Activated CD8-positive, alpha-beta memory T cell treated with anti-CD3 and anti-CD28 coated beads, Interleukin-2, amount 10 ng/mL, durations not matched to agents 7 days and 5 days (primary cell): ENCODE measurements at regions of chr18 and their contacts with region 1.

Region 1: DNA sequence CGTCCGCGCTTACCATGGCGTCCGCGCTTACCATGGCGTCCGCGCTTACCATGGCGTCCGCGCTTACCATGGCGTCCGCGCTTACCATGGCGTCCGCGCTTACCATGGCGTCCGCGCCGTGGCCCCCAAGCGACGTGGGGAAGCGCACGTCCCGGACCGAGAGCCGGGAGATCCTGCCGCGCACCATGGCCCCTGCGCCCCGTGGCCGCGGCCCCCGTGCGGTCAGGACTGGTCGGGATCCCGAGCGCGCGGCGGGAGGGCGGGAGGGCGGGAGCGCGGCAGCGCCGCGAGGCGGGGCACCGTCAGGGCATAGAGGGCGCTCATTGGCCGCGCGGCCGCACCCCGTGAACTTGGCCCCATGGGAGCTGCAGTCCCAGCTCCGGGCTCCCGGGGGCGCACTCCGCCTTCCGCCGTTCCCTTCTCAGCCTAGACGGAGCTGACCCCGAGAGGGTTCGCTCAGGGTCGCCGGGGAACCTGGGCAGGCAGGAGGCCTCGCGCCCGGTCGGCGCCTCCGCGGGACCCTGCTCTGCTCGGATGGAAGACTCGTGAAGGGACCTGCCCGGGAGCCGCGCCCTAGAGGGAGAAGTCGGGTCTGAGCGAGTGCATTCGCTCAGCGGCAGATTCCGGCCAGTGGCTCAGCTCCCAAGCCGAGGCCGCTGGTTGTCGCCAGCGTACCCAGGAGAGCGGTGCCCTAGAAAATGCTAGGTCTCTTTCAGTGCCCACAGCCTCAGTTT is at the start of gene ENOSF1:
- DNase-seq: peak; percentile 91
- ATAC-seq: peak; percentile 90
- H3K4me3 Mint-ChIP-seq: peak within 1 kb of the TSS; percentile 85
- H3K27ac Mint-ChIP-seq: peak within 1 kb of the TSS; percentile 87
- H3K4me1 Mint-ChIP-seq: peaks cover 58% of the 10 kb centered on the region
- H3K27me3 Mint-ChIP-seq: no peaks in the 10 kb centered on the region
- total RNA-seq, gene ENOSF1: 79.3 to 84.3 TPM

Region 2: GRCh38 chr18:623761-624620 is 88.6 kb before region 1 on chr18:
- CTCF ChIA-PET with region 1: interaction called, 25 read pairs
- DNase-seq: peak; percentile 75
- ATAC-seq: peak; percentile 83
- H3K4me3 Mint-ChIP-seq: no peak overlapping the region
- H3K27ac Mint-ChIP-seq: no peak overlapping the region
- H3K4me1 Mint-ChIP-seq: no peaks in the 10 kb centered on the region
- H3K27me3 Mint-ChIP-seq: peaks cover 36% of the 10 kb centered on the region

Region 3: DNA sequence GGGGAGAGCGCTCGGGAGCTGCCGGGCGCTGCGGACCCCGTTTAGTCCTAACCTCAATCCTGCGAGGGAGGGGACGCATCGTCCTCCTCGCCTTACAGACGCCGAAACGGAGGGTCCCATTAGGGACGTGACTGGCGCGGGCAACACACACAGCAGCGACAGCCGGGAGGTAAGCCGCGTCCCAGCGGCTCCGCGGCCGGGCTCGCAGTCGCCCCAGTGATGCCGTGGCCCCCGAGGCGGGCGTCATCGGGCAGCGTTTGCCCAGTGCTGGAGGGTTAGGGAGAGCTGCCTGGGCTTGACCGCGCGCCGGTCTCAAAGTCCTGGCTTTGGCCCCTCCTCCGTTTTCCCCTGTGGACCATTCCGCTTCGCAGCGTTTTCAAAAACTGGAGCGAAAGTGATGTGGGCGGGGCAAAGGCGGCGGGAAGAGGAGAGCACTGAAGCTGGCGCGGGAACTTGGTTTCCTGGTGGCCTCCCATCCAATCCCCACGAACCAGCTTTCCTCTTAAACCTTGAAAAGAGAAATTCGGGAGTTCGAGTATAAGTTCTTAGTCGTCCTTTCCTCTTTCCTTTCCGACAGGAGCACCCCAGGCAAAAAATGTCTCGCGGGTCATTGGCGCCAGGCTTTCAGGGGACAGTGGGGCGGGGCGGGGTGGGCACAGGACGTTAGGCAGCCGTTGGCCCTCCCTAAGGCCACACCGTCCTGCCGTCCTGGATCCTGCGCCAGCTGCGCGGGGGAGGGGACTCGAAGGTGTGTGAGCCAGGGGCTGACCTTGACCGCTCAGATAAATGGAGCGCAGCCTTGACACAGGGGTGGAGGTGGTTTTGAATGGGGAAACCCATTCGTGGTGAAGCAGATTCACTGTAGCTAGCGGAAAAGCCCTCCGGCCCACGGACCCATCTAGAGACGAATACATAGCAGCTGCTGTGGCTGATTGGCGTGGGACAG is 54.3 kb before region 1 on chr18:
- CTCF ChIA-PET with region 1: interaction called, 13 read pairs
- DNase-seq: peak; percentile 90
- ATAC-seq: peak; percentile 80
- H3K4me3 Mint-ChIP-seq: peak overlapping the region; percentile 96
- H3K27ac Mint-ChIP-seq: peak overlapping the region; percentile 89
- H3K4me1 Mint-ChIP-seq: peaks cover 46% of the 10 kb centered on the region
- H3K27me3 Mint-ChIP-seq: no peaks in the 10 kb centered on the region

Region 4: GRCh38 chr18:681985-682384 is 30.6 kb before region 1 on chr18:
- CTCF ChIA-PET with region 1: interaction called, 13 read pairs
- DNase-seq: peak; percentile 91
- ATAC-seq: peak; percentile 97
- H3K4me3 Mint-ChIP-seq: peak overlapping the region; percentile 19
- H3K27ac Mint-ChIP-seq: peak overlapping the region; percentile 90
- H3K4me1 Mint-ChIP-seq: peaks cover 35% of the 10 kb centered on the region
- H3K27me3 Mint-ChIP-seq: no peaks in the 10 kb centered on the region

Region 5: DNA sequence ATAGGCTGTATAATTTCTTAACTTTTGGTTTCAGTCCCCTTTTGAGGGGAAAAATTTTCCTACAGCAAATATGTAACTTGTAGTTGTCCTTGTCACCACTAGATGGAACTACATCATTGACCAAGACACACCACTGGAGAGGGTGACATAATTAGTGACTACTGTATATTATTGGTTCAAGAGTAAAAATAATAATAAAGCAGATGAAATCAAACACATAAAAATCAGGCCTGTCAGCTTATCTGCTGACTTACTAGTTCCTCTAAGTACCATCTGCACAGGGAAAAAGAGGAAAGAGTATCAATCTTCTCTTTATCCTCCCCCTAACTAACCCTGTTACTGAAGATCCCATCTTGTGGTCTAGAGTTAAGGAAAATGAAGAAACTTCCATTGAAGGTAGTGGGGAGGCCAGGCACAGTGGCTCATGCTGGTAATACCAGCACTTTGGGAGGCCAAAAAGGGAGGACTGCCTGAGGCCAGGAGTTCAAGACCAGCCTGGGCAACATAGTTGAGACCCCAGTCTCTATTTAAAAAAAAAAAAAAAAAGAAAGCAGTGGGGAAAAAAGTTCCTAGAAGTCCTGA is 29.5 kb after region 1 on chr18:
- CTCF ChIA-PET with region 1: interaction called, 12 read pairs
- DNase-seq: no peak
- ATAC-seq: peak; percentile 78
- H3K4me3 Mint-ChIP-seq: no peak overlapping the region
- H3K27ac Mint-ChIP-seq: peak overlapping the region; percentile 32
- H3K4me1 Mint-ChIP-seq: peaks cover 6% of the 10 kb centered on the region
- H3K27me3 Mint-ChIP-seq: no peaks in the 10 kb centered on the region